AG04449 (cell line): ENCODE measurements at regions of chr3 and their contacts with region 1.

Region 1: DNA sequence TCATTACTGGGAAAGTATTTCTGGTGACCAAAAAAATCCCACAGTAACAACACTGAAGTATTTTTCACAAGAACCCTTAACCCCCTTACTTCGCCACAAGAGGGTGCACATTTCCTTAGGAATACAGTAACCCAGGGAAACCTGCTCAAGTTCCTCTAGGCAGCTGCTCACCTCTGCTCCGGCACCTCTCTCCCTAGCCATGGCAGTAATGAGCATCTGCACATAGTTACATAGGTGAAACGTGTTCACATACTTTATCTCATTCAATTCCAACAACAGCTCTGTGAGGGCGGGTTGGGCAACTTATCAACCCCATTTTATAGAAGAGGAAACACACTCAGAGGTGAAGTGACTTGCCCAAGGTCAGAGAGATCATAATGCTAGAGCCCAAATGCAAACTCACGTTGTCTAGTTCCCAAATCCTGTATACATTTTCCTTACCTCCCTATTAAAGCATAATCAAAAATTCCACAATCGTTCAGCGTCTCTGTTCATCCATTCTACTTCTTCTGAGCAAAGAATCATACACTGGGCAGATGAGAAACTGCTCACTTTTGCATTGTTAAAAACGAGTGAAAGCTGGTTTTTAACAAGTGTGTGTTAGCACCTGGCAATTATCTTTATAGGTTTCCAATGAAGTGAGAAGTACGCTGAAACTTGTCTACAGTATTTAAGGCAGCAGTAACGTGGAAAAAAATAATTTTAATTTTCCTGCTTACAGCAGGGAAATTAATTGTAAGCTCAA is 90.7 kb downstream of the IGF2BP2 start:
- DNase-seq: no peak
- H3K4me3 ChIP-seq: no peak overlapping the region
- CTCF ChIP-seq: peak; percentile 46

Region 2: DNA sequence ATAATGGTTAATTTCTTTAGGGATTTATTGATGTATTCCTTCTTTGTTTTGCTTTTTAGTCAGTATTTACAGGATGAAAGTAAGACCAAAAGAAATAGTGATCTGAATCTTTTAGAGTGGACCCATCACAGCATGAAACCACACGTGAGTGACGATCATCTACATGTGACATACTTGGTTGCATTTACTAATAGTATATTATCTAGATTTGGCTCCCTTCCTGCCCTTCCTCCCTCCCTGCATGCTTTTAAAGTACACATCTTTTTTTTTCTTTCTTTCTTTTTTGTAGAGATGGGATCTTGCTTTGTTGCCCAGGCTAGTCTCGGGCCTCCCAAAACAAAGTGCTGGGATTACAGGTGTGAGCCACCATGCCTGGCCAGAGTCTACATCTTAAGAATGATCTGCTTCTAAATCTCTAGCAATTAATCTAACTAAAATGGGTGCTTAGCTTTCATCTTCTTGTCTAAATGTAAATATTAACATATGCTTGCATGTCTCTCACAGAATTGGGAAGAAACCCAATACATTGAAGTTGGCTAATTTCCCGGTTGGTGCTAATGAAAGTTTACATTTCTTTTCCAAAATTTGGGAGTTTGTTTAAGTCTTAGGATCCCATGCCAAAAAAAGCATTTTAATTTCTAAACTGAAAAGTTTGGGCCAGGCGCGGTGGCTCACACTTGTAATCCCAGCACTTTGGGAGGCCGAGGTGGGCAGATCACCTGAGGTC is 110.0 kb before region 1 on chr3:
- CTCF ChIA-PET with region 1: no interaction called
- POLR2A ChIA-PET with region 1: no interaction called
- DNase-seq: no peak
- H3K4me3 ChIP-seq: no peak overlapping the region
- CTCF ChIP-seq: no peak

Region 3: DNA sequence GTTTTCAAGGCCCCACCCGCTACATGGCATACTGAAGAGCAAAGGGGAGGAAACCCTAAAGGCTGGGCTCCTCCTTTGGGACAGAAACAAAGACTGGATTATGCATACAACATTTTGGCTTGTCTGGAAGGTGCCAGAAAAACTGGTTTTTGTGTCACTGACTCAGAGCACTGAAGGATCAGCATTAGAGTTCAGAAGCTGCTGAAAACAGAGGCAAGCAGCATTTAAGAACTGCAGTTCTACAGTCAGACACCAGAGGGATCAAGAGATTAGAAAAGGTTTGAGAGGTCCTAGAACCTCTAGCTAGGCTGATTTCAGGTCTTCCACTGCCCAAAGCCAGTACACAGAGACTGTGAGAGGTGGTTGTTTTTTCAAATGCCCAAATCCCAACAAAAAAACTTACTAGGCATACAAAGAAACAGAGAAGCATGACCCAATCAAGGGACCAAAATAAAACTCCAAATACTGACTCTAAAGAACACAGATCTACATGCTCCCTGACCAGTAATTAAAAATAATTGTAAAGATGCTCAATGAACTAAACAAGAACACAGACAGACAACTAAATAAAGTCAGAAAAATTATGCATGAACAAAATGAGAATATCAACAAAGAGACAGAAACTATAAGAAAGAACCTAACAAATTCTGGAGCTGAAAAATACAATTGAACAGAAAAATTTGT is 56.9 kb before region 1 on chr3:
- CTCF ChIA-PET with region 1: interaction called, 16 read pairs
- POLR2A ChIA-PET with region 1: no interaction called
- DNase-seq: no peak
- H3K4me3 ChIP-seq: no peak overlapping the region
- CTCF ChIP-seq: peak; percentile 55

Region 4: DNA sequence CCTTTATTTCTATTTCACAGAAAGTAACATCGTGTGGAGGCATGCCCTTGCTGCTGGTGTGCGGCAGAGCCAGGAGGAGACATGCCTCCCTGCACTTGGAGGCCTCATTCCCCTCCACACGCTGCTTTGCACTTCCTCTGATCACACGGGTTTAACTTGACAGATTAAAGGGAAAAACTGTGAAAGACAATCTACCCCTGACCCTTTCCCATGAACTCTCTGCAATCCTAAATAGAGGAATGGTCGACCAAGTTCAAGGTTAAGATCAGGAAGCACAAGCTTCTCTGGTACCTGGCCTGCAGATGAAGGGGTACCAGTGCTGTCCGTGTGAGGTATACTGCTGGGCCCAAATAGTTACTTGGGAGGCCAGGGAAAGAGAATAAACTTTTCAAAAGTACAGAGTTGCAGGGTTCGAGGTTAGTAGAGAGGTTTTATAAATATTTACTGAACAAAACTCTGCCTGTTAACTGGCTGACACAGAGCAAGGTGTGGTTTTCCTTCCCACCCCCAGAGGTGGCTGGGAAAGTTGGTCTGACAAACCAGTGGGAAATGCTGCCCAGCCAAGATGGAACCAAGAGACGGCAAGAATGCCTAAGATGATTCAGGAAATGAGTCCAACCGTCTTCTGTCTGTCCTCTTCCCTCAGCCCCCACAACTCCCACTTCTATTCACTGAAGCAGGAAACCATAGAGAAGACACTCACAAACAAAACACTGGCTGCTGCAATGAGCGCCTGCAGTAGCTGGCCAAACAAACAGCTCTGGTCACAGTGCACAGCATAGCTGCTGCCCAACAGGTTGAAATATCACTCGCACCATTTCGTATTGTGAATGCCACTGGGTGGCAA is 11.1 kb after region 1 on chr3:
- CTCF ChIA-PET with region 1: interaction called, 21 read pairs
- POLR2A ChIA-PET with region 1: no interaction called
- DNase-seq: peak; percentile 74
- H3K4me3 ChIP-seq: no peak overlapping the region
- CTCF ChIP-seq: no peak

Region 5: DNA sequence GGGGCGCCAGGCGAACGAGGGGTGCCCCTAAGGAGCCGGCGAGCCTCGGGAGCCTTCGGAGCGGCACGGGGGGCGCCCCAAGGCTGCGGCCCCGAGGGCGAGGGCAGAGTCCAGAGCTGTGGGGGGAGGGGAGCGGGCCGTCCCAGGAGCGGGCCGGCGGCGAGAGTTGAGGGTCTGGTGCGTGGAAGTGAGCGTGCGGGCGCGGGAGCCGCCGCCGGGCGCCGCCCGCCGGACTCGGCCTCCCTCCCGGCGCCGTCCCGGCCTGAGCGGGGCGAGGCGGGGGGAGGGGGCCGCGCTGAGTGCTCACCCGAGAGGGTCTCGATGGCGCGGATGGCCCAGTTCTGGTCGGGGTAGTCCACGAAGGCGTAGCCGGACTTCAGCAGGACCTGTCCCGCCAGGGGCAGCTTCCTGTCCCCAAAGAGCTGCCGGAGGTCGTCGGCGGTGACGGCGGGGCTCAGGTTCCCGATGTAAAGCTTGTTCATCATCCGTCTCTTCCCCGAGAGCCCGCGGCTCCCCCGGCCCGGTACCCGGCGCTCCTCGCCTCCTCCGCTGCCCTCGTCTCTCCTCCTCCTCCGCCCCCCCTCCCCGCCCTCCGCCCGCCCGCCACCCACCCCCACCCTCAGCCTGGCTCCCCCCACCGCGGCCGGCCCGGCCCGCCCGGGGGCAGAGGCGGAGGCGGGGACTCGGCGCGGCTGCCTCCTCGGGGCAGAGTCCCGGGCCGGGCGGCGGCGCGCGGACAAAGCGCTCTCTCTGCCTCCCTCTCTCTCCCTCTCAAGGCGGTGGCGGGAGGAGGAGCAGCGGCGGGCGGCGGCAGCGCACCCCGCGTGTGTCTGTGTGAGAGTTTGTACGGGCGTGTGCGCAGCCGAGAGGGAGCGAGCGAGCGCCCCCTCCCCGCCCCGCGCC is 90.6 kb after region 1 on chr3 and contains the start of gene IGF2BP2:
- CTCF ChIA-PET with region 1: interaction called, 11 read pairs
- POLR2A ChIA-PET with region 1: interaction called, 12 read pairs
- DNase-seq: no peak
- H3K4me3 ChIP-seq: peak within 1 kb of the TSS; percentile 92
- CTCF ChIP-seq: peak; percentile 33

Region 6: DNA sequence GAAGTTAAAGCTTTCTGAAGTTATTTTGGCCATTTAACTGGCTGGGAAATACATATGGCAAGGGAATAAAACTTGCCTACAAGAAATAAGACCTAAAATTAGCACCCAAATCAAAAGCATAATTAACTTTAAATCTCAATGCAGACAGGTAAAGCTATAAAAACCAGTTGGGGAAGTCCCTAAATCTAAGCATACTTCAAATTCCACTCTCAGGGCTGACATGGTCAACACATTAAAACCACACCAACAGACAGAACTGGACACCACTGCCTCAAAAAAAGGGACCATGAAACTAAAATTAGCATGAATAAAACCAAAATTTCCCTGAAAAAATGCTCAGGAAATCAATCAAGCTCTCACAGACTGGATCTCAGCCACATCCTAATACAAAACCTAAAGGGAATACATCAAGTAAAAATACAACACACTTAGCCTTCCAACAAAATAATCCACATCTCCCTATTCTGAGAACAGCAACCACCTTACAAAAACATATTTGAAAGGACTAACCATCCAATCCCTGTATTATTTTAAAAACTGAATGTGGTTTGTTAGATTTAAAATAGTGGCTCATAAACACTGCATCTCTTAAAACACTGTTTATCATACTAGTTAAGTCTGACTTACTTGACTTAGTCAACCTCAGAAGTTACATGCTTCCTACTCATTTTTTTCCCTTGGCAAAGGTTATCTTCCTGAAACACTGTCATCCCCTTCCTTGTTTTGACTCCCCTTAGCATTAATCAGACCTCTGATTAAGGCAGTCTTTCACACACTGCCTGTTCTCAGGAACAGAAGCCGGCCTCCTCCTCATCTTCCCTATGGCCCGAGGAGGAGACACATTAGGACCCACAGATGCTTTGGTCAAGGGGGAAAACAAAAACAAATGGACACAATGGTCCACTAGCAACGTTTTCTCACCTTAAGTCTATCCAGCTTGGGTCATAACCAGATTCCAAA is 195.3 kb after region 1 on chr3:
- CTCF ChIA-PET with region 1: interaction called, 11 read pairs
- POLR2A ChIA-PET with region 1: no interaction called
- DNase-seq: no peak
- H3K4me3 ChIP-seq: no peak overlapping the region
- CTCF ChIP-seq: no peak